Aorta (tissue), 5 donors: ENCODE measurements at regions of chr3 and their contacts with region 1.

Region 1: GRCh38 chr3:141231101-141231935 is at the start of gene PXYLP1:
- DNase-seq: peak; percentile 96 to 98
- ATAC-seq: peak; percentile 98
- H3K4me3 ChIP-seq: peak within 1 kb of the TSS; percentile 58 to 84
- H3K27ac ChIP-seq: peak within 1 kb of the TSS; percentile 45 to 69
- H3K4me1 ChIP-seq: no peaks in the 10 kb centered on the region
- H3K27me3 ChIP-seq: no peaks in the 10 kb centered on the region
- total RNA-seq, gene PXYLP1: 19.2 to 29.6 TPM

Region 2: DNA sequence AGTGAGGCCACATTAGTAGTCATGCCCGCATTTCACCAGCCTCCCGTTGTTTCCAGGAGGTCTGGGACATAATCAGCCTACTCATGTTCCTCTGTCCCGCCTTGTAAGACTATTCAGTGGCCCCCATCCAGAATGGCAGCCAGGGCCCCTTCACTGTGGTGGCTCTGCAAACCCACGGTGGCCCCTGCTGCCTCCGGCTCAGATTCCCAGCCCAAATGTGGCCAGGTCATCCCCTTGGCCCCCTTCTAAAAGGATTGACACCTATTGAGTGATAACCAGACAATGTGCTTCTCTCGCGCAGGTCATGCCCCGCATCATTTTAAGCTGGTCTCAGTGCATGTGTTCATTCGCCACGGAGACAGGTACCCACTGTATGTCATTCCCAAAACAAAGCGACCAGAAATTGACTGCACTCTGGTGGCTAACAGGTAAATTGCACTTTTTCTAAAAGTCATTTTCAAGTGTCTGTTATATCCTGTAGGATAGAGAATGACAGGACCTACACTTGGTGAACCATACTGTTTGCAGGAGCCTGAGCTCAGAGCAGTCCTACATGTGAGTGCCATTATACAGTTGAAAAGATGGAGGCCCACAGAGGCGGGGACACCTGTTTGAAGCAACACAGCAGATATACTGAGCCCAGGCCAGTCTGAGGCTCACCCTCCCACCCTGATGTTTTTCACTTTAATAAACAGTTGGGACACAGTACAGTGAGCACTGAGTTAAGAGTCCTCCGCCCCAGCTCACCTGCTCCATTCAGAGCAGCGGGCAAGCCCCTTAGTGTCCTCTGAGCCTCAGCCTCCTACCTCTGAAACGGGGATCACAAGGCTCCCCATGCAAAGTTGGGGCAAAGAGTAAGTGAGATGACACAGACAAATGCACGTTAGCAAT is 48.0 kb after region 1 on chr3:
- intact Hi-C with region 1: loop called (anchors 2 kb)
- DNase-seq: no peak
- ATAC-seq: peak; percentile 39
- H3K4me3 ChIP-seq: no peak overlapping the region
- H3K27ac ChIP-seq: peak overlapping the region; percentile 91 to 98
- H3K4me1 ChIP-seq: no peaks in the 10 kb centered on the region
- H3K27me3 ChIP-seq: no peaks in the 10 kb centered on the region

Region 3: GRCh38 chr3:141452036-141452435 is 220.7 kb after region 1 on chr3:
- intact Hi-C with region 1: loop called (anchors 5 to 10 kb)
- DNase-seq: no peak
- ATAC-seq: peak; percentile 81
- H3K4me3 ChIP-seq: no peak overlapping the region
- H3K27ac ChIP-seq: peak overlapping the region in 1 of 2 donors; percentile 37
- H3K4me1 ChIP-seq: peaks cover 0 to 3% of the 10 kb centered on the region in 2 donors
- H3K27me3 ChIP-seq: no peaks in the 10 kb centered on the region